ENCODE measurements at regions of chr22 and their contacts with region 1.

Region 1: DNA sequence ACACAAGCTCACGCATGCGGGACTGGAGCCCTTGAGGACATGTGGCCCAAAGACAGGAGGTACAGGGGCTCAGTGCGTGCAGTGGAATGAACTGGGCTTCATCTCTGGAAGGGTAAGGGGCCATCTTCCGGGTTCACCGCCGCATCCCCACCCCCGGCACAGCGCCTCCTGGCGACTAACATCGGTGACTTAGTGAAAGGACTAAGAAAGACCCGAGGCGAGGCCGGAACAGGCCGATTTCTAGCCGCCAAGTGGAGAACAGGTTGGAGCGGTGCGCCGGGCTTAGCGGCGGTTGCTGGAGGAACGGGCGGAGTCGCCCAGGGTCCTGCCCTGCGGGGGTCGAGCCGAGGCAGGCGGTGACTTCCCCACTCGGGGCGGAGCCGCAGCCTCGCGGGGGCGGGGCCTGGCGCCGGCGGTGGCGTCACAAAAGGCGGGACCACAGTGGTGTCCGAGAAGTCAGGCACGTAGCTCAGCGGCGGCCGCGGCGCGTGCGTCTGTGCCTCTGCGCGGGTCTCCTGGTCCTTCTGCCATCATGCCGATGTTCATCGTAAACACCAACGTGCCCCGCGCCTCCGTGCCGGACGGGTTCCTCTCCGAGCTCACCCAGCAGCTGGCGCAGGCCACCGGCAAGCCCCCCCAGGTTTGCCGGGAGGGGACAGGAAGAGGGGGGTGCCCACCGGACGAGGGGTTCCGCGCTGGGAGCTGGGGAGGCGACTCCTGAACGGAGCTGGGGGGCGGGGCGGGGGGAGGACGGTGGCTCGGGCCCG is at the start of gene MIF:
- DNase-seq: peak; percentile 91 to 98 (median 95)
- H3K4me3 ChIP-seq: peak within 1 kb of the TSS; percentile 57 to 69
- H3K4me3 Mint-ChIP-seq: peak within 1 kb of the TSS; percentile 91 to 97 (median 95)
- H3K27ac ChIP-seq: peak within 1 kb of the TSS; percentile 77
- H3K27ac Mint-ChIP-seq: peak within 1 kb of the TSS; percentile 91 to 99 (median 98)
- H3K4me1 ChIP-seq: peaks cover 22% of the 10 kb centered on the region
- H3K4me1 Mint-ChIP-seq: peaks cover 13 to 32% (median 23%) of the 10 kb centered on the region in 4 donors
- H3K27me3 ChIP-seq: no peaks in the 10 kb centered on the region
- H3K27me3 Mint-ChIP-seq: no peaks in the 10 kb centered on the region
- total RNA-seq, gene MIF: 208 to 217 TPM

Region 2: DNA sequence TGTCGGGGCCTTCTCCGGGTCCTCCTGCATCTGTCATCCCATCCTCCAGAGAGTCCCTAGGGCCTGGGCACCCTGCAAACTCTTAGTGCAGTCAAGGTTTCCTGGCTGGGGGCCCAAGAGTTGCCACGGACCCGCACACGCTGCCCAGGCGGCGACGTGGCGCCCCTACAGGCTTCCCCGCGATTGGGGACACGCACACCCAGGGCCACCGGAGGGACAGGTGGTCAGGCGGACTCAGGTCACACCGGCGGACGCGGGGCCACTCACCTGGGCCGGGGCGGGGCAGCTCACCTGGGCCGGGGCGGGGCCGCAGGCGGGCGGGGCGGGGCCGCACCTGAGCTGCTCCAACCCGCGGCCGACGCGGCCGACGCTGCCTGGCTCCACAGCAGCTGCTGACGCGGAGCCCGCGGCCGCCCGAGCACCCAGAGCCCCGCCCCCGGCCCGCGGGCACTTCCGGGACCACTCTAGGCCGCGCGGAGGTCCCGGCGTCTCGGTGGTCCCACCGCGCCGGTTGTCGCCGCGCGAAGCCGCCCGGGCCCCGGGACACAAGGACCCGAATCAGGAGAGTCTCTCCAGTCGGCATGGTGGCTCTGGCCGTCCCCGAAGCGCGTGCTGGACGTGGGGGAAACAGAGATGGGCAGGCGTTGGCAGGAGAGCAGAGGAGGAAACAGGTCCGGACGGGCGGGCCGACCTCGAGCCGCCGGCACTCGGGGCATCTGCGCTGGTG is 143.2 kb before region 1 on chr22 and contains the start of gene ZNF70:
- CTCF ChIA-PET with region 1: no interaction called
- POLR2A ChIA-PET with region 1: interaction called, 11 read pairs
- intact Hi-C with region 1: no loop called
- DNase-seq: peak; percentile 83 to 88 (median 86)
- H3K4me3 ChIP-seq: peak within 1 kb of the TSS; percentile 73 to 82
- H3K4me3 Mint-ChIP-seq: peak within 1 kb of the TSS; percentile 76 to 85 (median 80)
- H3K27ac ChIP-seq: peak within 1 kb of the TSS; percentile 67
- H3K27ac Mint-ChIP-seq: peak within 1 kb of the TSS; percentile 69 to 87 (median 78)
- H3K4me1 ChIP-seq: peaks cover 13% of the 10 kb centered on the region
- H3K4me1 Mint-ChIP-seq: peaks cover 7 to 21% (median 12%) of the 10 kb centered on the region in 4 donors
- H3K27me3 ChIP-seq: no peaks in the 10 kb centered on the region
- H3K27me3 Mint-ChIP-seq: no peaks in the 10 kb centered on the region
- total RNA-seq, gene ZNF70: 6.4 to 7.4 TPM

Region 3: GRCh38 chr22:23857606-23858483 is 36.3 kb before region 1 on chr22 and contains the start of gene SLC2A11:
- CTCF ChIA-PET with region 1: interaction called, 32 read pairs
- POLR2A ChIA-PET with region 1: interaction called, 73 read pairs
- intact Hi-C with region 1: loop called (anchors 5 kb)
- DNase-seq: peak; percentile 90 to 95 (median 92)
- H3K4me3 ChIP-seq: peak within 1 kb of the TSS; percentile 86 to 98
- H3K4me3 Mint-ChIP-seq: peak within 1 kb of the TSS; percentile 92 to 98 (median 95)
- H3K27ac ChIP-seq: peak within 1 kb of the TSS; percentile 76
- H3K27ac Mint-ChIP-seq: peak within 1 kb of the TSS; percentile 84 to 94 (median 89)
- H3K4me1 ChIP-seq: peaks cover 19% of the 10 kb centered on the region
- H3K4me1 Mint-ChIP-seq: peaks cover 14 to 24% (median 19%) of the 10 kb centered on the region in 4 donors
- H3K27me3 ChIP-seq: no peaks in the 10 kb centered on the region
- H3K27me3 Mint-ChIP-seq: no peaks in the 10 kb centered on the region
- total RNA-seq, gene SLC2A11: 24.5 to 27.2 TPM

Region 4: DNA sequence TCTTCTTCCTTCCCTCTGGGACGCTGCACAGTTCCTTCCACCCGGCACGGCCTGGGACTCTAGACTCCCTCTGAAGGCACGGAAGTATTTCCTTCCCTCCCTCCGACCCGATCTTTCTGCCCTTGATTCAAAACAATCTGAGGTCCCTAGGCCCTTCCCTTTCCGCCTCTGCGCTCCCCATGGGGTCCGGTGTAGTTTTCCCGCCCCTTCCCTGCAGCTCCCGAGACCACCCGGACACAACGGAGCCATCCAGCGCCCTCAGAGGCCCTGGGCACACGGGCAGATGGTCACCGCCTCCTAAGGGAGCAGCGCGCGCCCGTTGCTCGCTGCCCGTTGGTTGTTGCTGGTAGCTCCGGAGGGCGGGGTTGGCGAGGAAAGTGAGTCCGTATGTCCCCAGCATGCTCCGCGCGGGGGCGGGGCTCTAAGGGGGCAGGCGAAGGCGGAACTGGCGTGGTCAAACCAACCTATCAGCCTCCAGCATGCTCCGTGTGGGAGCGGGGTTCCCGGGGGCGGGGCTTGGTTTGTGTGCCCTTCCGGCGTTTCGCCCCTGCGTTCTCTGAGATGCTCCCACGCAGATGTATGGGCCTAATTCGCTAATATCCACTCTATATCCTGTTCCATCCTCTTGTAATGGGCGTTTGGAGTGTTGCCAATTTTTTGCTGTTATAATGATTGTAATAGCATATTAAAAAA is 19.7 kb after region 1 on chr22:
- CTCF ChIA-PET with region 1: interaction called, 56 read pairs
- POLR2A ChIA-PET with region 1: interaction called, 70 read pairs
- intact Hi-C with region 1: loop called (anchors 1 kb)
- DNase-seq: peak; percentile 96 to 99 (median 97)
- H3K4me3 ChIP-seq: peak overlapping the region; percentile 57 to 86
- H3K4me3 Mint-ChIP-seq: peak overlapping the region; percentile 91 to 99 (median 96)
- H3K27ac ChIP-seq: peak overlapping the region; percentile 79
- H3K27ac Mint-ChIP-seq: peak overlapping the region; percentile 88 to 98 (median 96)
- H3K4me1 ChIP-seq: peaks cover 7% of the 10 kb centered on the region
- H3K4me1 Mint-ChIP-seq: peaks cover 9 to 25% (median 15%) of the 10 kb centered on the region in 4 donors
- H3K27me3 ChIP-seq: no peaks in the 10 kb centered on the region
- H3K27me3 Mint-ChIP-seq: no peaks in the 10 kb centered on the region

Region 5: DNA sequence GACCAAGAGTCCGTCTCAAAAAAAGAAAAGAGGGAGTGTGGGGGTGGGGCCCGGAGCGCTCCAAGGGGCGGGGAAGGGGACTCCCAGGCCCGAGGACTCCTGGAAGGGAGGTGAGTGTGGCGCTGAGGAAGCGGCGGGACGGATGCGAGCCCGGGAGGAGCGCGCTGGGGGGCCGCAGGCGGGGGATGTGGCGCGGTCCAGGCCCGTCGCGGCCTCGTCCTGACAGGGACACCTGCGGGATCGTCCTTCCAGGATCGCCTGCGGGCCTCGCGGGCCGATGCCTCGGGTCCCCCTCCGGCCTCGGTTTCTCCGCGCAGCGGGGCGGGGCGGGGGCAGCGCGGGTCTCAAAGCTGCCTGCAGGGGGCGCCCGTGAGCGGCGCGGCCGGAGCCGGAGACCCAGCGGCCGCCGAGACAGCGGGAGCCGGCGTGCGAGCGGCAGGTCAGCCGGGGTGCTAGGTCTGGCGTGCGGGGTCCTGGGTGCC is 529.4 kb after region 1 on chr22:
- CTCF ChIA-PET with region 1: no interaction called
- POLR2A ChIA-PET with region 1: interaction called, 10 read pairs
- intact Hi-C with region 1: no loop called
- DNase-seq: peak in 4 of 5 donors; percentile 44 to 64 (median 57)
- H3K4me3 ChIP-seq: peak overlapping the region in 1 of 2 donors; percentile 32
- H3K4me3 Mint-ChIP-seq: peak overlapping the region in 7 of 8 donors; percentile 40 to 75 (median 65)
- H3K27ac ChIP-seq: no peak overlapping the region
- H3K27ac Mint-ChIP-seq: peak overlapping the region in 1 of 7 donors; percentile 86
- H3K4me1 ChIP-seq: peaks cover 37% of the 10 kb centered on the region
- H3K4me1 Mint-ChIP-seq: peaks cover 26 to 41% (median 33%) of the 10 kb centered on the region in 4 donors
- H3K27me3 ChIP-seq: no peaks in the 10 kb centered on the region
- H3K27me3 Mint-ChIP-seq: no peaks in the 10 kb centered on the region

Measured in CD4-positive, alpha-beta memory T cell (primary cell).